A549 (cell line): ENCODE measurements at regions of chr2 and their contacts with region 1.

Region 1: DNA sequence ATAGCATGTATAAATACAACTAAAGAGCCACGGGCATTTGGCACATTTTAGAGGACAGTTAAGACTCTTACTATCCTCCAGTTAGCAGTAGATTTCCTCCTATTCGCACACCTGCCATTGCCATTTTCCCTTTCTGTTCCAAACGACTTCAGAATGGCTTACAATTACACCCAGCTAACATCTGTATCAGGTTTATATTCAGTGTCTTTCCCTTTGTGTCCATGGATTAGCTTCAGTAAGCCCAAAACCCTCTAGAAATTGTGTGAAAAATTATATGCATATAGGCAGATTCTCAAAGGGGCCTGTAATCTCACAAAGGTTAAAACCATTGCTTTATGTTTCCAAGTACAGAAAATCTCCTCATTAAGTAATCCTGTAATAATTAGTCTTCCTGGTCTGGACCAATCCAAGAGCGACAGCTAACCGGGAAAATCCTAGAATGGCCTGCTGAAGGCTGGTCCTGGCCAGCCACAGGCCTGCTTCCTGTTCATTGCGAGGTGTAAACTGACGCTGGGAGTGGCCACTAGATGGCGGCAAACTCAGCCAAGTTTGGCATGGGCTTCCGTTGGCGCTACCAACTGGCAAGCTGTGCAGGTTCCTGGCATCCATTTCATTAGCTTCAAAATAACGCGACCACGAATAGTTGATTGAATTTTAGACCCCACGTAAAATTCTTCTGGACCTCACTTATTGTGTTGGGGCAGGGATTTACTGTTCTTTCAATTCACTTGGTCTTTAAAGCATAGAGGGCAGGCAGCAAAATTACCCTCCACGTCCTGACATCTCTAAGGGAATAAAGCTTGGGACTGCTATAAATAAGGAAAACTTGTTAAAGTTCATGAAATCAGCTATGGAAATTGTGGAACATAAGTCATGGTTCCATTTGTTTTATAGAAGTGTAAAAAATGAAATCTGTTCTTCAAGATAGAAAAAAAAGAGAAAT is 17.1 kb downstream of the ARHGAP25 start:
- DNase-seq: peak; percentile 82 to 91
- ATAC-seq: peak; percentile 99 to 100
- H3K4me3 ChIP-seq: no peak overlapping the region
- H3K27ac ChIP-seq: no peak overlapping the region
- H3K4me1 ChIP-seq: no peaks in the 10 kb centered on the region
- CTCF ChIP-seq: peak; percentile 98
- EP300 ChIP-seq: no peak
- POLR2A ChIP-seq: no peak
- RAD21 ChIP-seq: peak; percentile 92 to 93

Region 2: GRCh38 chr2:68698567-68699377 is 52.9 kb before region 1 on chr2:
- CTCF ChIA-PET with region 1: interaction called, 10 read pairs
- POLR2A ChIA-PET with region 1: no interaction called
- DNase-seq: no peak
- ATAC-seq: no peak
- H3K4me3 ChIP-seq: no peak overlapping the region
- H3K27ac ChIP-seq: no peak overlapping the region
- H3K4me1 ChIP-seq: no peaks in the 10 kb centered on the region
- CTCF ChIP-seq: no peak
- EP300 ChIP-seq: no peak
- POLR2A ChIP-seq: no peak
- RAD21 ChIP-seq: no peak

Region 3: GRCh38 chr2:68726608-68727367 is 24.9 kb before region 1 on chr2:
- CTCF ChIA-PET with region 1: interaction called, 22 read pairs
- POLR2A ChIA-PET with region 1: no interaction called
- DNase-seq: no peak
- ATAC-seq: no peak
- H3K4me3 ChIP-seq: no peak overlapping the region
- H3K27ac ChIP-seq: no peak overlapping the region
- H3K4me1 ChIP-seq: peaks cover 5% of the 10 kb centered on the region; the same call in 1 of the 3 replicates
- CTCF ChIP-seq: no peak
- EP300 ChIP-seq: no peak
- POLR2A ChIP-seq: no peak
- RAD21 ChIP-seq: no peak

Region 4: DNA sequence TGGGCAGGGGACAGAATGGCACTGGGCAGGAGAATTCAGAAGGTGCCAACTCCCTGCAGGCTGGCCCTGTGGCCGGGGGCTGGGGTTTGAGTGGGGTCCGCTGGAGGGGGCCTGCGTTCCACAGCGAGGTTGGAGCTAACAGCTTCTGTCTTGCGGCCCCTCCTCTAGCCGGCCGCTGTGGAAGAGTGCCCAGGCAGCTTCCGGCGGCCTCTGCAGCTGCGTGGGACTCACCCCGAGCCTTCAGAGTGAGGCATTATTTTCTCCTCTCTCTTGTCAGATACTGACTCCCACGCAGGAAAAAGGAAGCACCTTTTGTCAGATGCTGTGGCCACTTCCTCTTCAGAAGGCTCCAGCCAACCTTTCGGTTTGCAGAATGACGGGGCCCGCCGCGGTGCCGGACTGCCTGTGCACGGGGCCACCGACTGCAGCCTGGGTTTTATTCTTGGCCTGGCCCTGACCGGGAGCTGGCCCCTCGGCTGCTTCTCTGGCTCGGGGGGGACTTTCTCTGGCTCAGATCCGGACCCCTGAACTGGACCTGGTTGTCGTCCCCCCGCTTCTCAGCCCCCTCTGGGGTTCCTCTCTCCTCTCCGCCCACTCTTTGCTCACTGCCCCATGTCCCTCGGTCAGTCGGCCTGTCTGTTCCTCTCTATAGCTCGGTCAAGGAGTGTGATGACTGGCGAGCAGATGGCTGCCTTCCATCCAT is 23.1 kb after region 1 on chr2:
- CTCF ChIA-PET with region 1: interaction called, 19 read pairs
- POLR2A ChIA-PET with region 1: no interaction called
- DNase-seq: no peak
- ATAC-seq: no peak
- H3K4me3 ChIP-seq: no peak overlapping the region
- H3K27ac ChIP-seq: no peak overlapping the region
- H3K4me1 ChIP-seq: no peaks in the 10 kb centered on the region
- CTCF ChIP-seq: no peak
- EP300 ChIP-seq: no peak
- POLR2A ChIP-seq: no peak
- RAD21 ChIP-seq: no peak

Region 5: DNA sequence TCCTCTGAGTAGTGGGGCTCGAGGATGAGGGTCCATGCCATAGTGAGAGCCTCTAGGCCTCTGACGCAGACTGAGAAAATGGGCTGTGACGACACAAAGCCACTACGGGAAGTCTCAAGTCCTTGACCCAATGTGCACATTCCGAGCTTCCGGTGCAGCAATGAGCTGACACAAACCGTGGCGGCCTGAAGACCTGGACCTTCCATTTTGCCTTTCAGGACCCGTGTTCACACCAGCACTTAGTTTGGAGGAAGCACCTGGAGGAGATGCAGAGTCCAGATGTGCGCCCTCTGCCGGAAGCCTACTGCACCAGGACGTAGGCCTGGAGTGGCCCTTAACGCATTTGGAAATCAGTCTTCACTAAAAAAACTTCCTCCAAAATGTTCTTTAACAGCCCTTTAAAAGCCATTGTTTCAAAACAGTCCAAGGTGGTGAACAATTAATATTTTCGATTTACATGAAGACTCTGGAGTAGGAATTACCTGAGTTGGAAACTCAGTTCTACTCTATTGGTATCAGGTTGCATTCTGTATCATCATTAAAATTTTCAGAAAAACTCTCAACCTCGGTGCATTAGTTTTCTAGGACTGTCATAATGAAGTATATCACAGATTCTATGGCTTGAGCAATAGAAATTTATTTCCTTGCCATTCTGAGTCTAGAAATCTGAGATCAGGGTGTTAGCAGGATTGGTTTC is 85.6 kb after region 1 on chr2:
- CTCF ChIA-PET with region 1: interaction called, 15 read pairs
- POLR2A ChIA-PET with region 1: no interaction called
- DNase-seq: peak; percentile 66 to 76
- ATAC-seq: peak; percentile 86 to 96
- H3K4me3 ChIP-seq: no peak overlapping the region
- H3K27ac ChIP-seq: no peak overlapping the region
- H3K4me1 ChIP-seq: peaks cover 5% of the 10 kb centered on the region; the same call in 2 of the 3 replicates
- CTCF ChIP-seq: peak; percentile 78
- EP300 ChIP-seq: no peak
- POLR2A ChIP-seq: no peak
- RAD21 ChIP-seq: peak; percentile 50 to 51; a peak in 4 of 5 replicates

Region 6: GRCh38 chr2:68917034-68917718 is 165.5 kb after region 1 on chr2:
- CTCF ChIA-PET with region 1: interaction called, 227 read pairs
- POLR2A ChIA-PET with region 1: no interaction called
- DNase-seq: no peak
- ATAC-seq: no peak
- H3K4me3 ChIP-seq: no peak overlapping the region
- H3K27ac ChIP-seq: no peak overlapping the region
- H3K4me1 ChIP-seq: peaks cover 12% of the 10 kb centered on the region; the same call in 2 of the 3 replicates
- CTCF ChIP-seq: no peak
- EP300 ChIP-seq: no peak
- POLR2A ChIP-seq: no peak
- RAD21 ChIP-seq: no peak